CD8-positive, alpha-beta T cell (primary cell): ENCODE measurements at regions of chr20 and their contacts with region 1.

Region 1: GRCh38 chr20:51595058-51595532 is 52.6 kb upstream of the NFATC2 start:
- DNase-seq: peak; percentile 50 to 89 (median 75)
- ATAC-seq: peak; percentile 90
- H3K4me3 ChIP-seq: no peak overlapping the region
- H3K4me3 Mint-ChIP-seq: peak overlapping the region; percentile 38
- H3K27ac ChIP-seq: no peak overlapping the region
- H3K27ac Mint-ChIP-seq: peak overlapping the region; percentile 11
- H3K4me1 ChIP-seq: peaks cover 5% of the 10 kb centered on the region
- H3K4me1 Mint-ChIP-seq: peaks cover 12% of the 10 kb centered on the region
- H3K27me3 ChIP-seq: no peaks in the 10 kb centered on the region
- H3K27me3 Mint-ChIP-seq: no peaks in the 10 kb centered on the region
- CTCF ChIP-seq: peak; percentile 84

Region 2: DNA sequence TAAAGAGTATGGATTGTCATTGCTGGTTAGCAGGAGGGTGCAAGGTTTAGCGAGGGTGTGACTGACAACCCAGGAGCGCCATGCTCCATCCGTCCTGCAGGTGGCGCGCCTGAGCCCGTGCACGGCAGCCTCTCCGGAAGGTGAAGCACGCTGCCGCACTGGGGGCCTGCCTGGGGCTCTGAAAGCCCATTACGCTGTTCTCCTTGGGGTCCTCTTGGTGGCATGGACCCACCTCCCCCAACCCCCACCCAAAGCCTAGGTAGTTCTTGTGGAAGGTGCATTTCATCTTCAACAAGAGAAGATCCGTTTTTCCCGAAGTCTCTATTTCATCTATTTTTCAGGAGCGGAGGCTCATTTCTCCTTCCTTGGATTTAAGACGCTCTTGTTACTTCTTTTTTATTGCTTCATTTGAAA is 374.8 kb before region 1 on chr20:
- CTCF ChIA-PET with region 1: interaction called, 4 read pairs
- POLR2A ChIA-PET with region 1: no interaction called
- intact Hi-C with region 1: loop called in 1 of 2 experiments (anchors 1 kb)
- DNase-seq: peak; percentile 21 to 67 (median 50)
- ATAC-seq: peak; percentile 54
- H3K4me3 ChIP-seq: no peak overlapping the region
- H3K4me3 Mint-ChIP-seq: no peak overlapping the region
- H3K27ac ChIP-seq: no peak overlapping the region
- H3K27ac Mint-ChIP-seq: no peak overlapping the region
- H3K4me1 ChIP-seq: no peaks in the 10 kb centered on the region
- H3K4me1 Mint-ChIP-seq: peaks cover 10% of the 10 kb centered on the region
- H3K27me3 ChIP-seq: peaks cover 0 to 4% of the 10 kb centered on the region in 2 experiments
- H3K27me3 Mint-ChIP-seq: peaks cover 57% of the 10 kb centered on the region
- CTCF ChIP-seq: peak; percentile 81

Region 3: DNA sequence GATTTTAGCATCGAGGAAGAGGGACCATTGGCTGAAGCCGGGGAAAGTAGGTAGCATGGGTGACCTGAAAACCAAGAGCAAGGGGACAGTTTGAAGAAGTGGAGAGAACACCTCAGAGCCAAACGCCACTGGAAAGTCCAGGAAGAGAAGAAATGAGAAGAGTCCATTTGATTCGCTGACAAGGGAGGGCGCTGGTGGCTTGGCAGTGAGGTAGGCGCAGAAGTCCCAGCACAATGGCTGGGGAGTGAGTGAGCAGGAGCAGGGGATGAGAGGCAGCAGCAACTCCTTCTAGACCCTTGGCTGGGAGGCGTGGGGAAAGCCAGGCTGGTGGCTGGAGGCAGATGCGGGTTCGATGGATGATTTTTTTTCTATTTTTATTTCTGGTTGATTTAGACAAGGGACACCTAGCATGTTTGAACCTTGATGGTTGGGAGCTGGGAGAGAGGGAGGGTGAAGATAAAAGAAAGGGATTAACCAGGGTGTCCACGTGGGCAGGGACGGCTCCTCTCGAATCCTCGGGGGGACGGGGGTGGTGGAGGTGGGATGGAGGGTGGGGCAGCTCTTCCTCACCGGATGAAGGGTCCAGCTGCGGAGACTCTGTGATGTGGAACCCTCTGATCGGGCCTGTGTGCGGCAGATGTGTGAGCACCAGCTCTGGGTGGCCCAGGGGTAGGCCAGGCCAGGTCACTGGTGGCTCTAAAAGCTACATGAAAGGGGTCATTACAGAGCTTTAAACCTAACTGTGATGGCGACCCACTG is 216.7 kb before region 1 on chr20:
- CTCF ChIA-PET with region 1: interaction called, 103 read pairs
- POLR2A ChIA-PET with region 1: interaction called, 4 read pairs
- intact Hi-C with region 1: no loop called
- DNase-seq: peak in 1 of 9 experiments; percentile 20
- ATAC-seq: no peak
- H3K4me3 ChIP-seq: no peak overlapping the region
- H3K4me3 Mint-ChIP-seq: no peak overlapping the region
- H3K27ac ChIP-seq: no peak overlapping the region
- H3K27ac Mint-ChIP-seq: no peak overlapping the region
- H3K4me1 ChIP-seq: no peaks in the 10 kb centered on the region
- H3K4me1 Mint-ChIP-seq: no peaks in the 10 kb centered on the region
- H3K27me3 ChIP-seq: no peaks in the 10 kb centered on the region
- H3K27me3 Mint-ChIP-seq: no peaks in the 10 kb centered on the region
- CTCF ChIP-seq: no peak

Region 4: DNA sequence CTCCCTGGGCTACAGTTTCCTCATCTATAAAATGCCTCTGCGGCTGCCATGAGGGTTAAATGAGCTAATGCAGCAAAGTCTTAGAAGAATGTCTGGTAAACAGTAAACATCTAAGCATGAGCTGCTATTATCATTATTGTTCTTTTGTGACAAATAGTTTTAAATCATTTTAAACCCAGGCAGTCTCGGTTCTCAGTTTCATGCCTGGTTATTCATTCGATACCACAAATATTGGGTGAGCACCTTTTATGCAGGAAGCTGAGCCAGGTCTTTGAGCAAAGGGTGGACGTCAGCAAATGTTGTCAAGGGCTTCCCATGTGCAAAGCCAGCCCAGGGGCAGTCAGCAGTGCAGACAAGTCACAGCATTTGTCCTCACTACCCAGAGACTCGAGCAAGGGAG is 181.2 kb before region 1 on chr20:
- CTCF ChIA-PET with region 1: interaction called, 24 read pairs
- POLR2A ChIA-PET with region 1: no interaction called
- intact Hi-C with region 1: no loop called
- DNase-seq: peak in 3 of 9 experiments; percentile 54 to 76 (median 54)
- ATAC-seq: peak; percentile 47
- H3K4me3 ChIP-seq: no peak overlapping the region
- H3K4me3 Mint-ChIP-seq: no peak overlapping the region
- H3K27ac ChIP-seq: peak overlapping the region in 1 of 2 experiments; percentile 75
- H3K27ac Mint-ChIP-seq: peak overlapping the region; percentile 87
- H3K4me1 ChIP-seq: peaks cover 31% of the 10 kb centered on the region
- H3K4me1 Mint-ChIP-seq: peaks cover 64% of the 10 kb centered on the region
- H3K27me3 ChIP-seq: no peaks in the 10 kb centered on the region
- H3K27me3 Mint-ChIP-seq: no peaks in the 10 kb centered on the region
- CTCF ChIP-seq: no peak

Region 5: DNA sequence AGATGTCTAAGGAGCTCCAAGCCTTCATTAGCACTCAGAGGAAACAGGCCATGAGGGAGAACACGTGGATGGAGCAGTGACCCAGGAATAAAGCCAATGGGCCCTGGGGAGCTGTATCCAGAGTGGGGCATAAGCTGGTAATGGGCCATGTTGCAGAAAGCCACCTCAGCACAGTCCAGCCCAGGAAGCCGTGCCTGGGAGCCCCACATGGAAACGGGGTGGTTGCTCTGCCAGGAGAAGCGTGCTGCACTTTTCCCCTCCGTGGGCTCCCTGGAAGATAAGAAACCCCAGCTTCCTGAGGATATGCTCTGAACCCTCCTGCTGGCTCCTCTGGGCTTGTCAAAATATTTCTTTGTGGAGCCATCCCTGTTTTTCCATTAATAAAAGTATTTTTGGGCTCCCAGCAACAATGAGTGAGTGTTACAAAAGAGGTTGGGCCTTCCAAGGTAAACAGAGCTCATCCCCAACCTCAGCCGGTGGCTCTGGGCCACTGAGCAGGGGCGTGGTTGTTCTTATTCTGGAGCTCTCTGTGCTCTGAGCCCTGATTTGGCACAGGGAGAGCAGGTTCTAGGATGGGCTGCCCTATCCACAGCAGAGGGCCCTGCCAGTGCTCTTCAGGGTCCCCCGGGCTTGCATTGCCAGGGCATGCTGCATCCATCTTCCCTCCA is 21.4 kb before region 1 on chr20:
- CTCF ChIA-PET with region 1: interaction called, 10 read pairs
- POLR2A ChIA-PET with region 1: no interaction called
- intact Hi-C with region 1: no loop called
- DNase-seq: no peak
- ATAC-seq: no peak
- H3K4me3 ChIP-seq: no peak overlapping the region
- H3K4me3 Mint-ChIP-seq: no peak overlapping the region
- H3K27ac ChIP-seq: no peak overlapping the region
- H3K27ac Mint-ChIP-seq: no peak overlapping the region
- H3K4me1 ChIP-seq: no peaks in the 10 kb centered on the region
- H3K4me1 Mint-ChIP-seq: no peaks in the 10 kb centered on the region
- H3K27me3 ChIP-seq: no peaks in the 10 kb centered on the region
- H3K27me3 Mint-ChIP-seq: no peaks in the 10 kb centered on the region
- CTCF ChIP-seq: no peak

Region 6: GRCh38 chr20:51624157-51624731 is 29.1 kb after region 1 on chr20:
- CTCF ChIA-PET with region 1: interaction called, 13 read pairs
- POLR2A ChIA-PET with region 1: no interaction called
- intact Hi-C with region 1: no loop called
- DNase-seq: peak; percentile 22 to 69 (median 58)
- ATAC-seq: peak; percentile 52
- H3K4me3 ChIP-seq: no peak overlapping the region
- H3K4me3 Mint-ChIP-seq: no peak overlapping the region
- H3K27ac ChIP-seq: no peak overlapping the region
- H3K27ac Mint-ChIP-seq: no peak overlapping the region
- H3K4me1 ChIP-seq: no peaks in the 10 kb centered on the region
- H3K4me1 Mint-ChIP-seq: peaks cover 2% of the 10 kb centered on the region
- H3K27me3 ChIP-seq: no peaks in the 10 kb centered on the region
- H3K27me3 Mint-ChIP-seq: peaks cover 3% of the 10 kb centered on the region
- CTCF ChIP-seq: peak; percentile 69